SK-MEL-5 (cell line): ENCODE measurements at regions of chr7 and their contacts with region 1.

Region 1: DNA sequence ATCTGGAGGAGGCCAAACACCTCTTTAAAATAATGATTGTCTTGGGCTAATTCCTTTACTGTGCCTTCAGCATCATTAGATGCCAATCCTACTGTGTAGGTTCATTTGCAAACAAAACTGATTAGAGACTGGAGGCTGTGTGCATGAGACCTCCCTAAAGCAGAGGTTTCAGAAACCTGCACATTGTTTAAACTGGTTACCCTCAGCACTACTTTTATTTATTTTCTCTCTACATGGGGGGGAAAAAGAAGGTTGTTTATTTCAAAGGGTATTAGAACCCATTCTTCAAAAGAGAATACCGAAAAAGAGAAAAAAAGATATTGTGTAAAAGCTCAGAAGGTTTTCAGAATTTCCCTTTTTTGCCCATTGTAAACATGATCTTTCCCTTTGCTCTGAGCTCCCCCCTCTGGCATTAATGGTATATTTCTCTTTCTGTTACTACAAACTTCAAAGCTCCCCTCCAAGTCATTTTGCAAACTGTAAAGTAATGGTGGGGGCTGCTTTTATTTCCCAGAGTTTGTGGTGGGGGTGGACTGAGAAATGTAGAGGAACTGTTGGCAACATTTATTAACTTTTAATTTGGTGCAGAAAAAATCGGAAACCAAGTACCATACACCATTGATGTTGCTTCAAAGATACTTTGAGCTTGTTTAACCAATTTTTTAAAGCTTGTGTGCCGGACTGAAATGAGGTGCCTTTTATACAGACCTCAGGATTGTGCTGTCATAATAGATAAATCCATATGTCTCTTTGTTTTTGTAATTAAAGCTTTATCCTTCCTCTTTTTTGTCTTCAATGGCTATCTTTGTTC is 181.4 kb downstream of the EXOC4 start:
- DNase-seq: peak; percentile 63

Region 2: DNA sequence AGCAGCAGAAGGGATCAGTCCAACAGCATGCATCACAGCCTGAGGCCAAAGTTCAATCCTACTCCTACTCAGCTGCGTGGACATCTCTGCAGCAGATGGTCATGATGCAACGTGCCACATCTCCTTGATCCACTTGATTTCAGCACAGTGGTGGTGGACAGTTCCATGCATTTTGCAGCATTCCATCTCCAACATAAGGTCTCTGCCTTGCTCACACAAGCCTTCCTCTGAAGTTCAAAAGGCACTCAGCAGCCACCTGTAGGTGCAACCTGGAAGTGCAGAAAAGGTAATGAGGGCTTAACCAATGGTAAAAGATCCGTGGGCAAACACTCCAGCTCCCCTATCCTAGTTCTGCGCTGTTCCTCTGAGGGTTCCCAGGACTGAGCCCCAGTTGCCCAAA is 294.9 kb before region 1 on chr7:
- in situ Hi-C with region 1: no loop called
- DNase-seq: peak; percentile 70

Region 3: DNA sequence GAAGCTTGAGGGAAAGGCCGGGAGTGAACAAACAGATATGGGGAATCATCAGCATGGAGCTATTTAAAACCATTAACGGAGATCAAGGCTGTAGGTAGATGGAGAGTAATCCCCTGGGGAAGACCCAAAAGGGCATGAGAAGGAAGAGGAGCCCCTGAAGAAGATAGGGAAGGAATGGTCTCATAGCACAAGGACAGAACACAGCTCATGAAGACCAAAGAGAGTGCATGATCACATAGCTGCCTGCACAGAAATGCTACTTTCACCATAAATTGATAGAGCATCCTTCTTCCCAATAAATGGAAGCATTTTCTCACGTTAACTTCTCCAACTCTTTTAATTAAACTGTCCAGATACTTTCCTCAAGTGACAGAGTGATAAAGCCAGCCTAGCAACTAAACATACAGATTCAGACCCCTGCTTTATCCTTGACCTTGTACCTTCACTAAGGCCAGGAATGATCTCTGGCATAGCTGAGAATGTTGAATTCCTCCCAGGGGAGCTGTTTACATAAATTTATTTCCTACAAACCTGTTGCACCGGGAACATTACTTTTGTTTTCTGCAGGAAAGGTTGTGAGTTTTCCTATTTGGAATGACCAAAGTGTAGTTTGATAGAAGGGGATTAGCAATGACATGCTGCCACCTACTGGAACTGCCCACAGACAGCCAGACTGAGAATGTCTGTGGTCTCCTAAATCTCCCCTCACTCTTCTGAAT is 582.1 kb after region 1 on chr7:
- in situ Hi-C with region 1: loop called (anchors 10 kb)
- DNase-seq: peak; percentile 78

Region 4: DNA sequence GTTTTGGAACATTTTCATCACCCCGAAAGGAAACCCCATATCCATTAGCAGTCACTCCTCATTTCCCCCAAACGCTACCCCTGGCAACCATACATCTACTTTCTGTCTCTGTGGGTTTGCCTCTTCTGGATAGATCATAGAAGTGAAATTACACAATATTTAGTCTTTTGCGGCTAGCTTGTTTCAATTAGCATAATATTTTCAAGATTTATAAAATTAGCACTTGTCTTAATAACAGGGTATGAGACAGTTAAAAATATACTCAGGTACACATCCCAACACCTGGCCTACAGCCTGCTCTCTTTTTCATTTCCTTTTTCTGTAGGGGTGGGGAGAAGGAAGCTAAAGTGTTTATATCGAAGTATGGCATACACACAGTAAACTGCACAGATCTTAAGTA is 611.5 kb after region 1 on chr7:
- in situ Hi-C with region 1: no loop called
- DNase-seq: no peak